Activated CD4-positive, alpha-beta memory T cell treated with anti-CD3 and anti-CD28 coated beads for 36 hours (primary cell): ENCODE measurements at regions of chr2 and their contacts with region 1.

Region 1: DNA sequence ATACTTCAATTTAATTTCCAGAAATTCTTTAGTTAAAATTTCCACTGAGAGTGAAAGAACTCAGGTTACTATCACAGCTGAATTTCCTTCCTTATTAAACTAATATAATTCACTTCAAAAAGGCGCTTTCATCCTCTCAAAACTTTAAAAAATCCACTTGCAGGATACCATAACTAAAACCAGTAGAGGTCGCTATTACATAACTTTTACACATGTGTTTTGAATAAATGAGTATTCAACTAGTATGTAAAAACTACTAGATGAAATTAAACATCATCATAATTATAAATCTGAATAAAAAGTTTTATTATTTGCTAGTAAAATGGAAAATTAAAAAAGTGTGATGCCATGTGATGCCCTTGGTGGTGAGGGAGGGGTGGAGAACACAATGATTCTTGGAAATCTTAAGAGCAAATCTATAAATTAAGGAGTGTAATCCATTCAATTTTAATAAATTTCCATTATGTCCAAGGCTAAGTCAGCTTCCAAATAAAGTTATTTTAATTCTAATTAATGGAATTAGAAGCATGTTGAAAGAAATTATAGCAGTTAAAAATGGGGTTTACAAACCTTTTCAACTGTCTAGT is 61.4 kb downstream of the SOS1 start:
- DNase-seq: no peak
- H3K4me3 Mint-ChIP-seq: no peak overlapping the region
- H3K27ac Mint-ChIP-seq: no peak overlapping the region
- H3K4me1 Mint-ChIP-seq: no peaks in the 10 kb centered on the region
- H3K27me3 Mint-ChIP-seq: no peaks in the 10 kb centered on the region

Region 2: GRCh38 chr2:39227628-39228412 is 168.4 kb after region 1 on chr2:
- CTCF ChIA-PET with region 1: interaction called, 410 read pairs
- POLR2A ChIA-PET with region 1: no interaction called
- intact Hi-C with region 1: loop called (anchors 1 kb)
- DNase-seq: peak; percentile 87
- H3K4me3 Mint-ChIP-seq: peak overlapping the region; percentile 56
- H3K27ac Mint-ChIP-seq: peak overlapping the region; percentile 59
- H3K4me1 Mint-ChIP-seq: peaks cover 36% of the 10 kb centered on the region
- H3K27me3 Mint-ChIP-seq: no peaks in the 10 kb centered on the region

Region 3: GRCh38 chr2:40230707-40231432 is 1171.4 kb after region 1 on chr2:
- CTCF ChIA-PET with region 1: no interaction called
- POLR2A ChIA-PET with region 1: no interaction called
- intact Hi-C with region 1: no loop called
- DNase-seq: no peak
- H3K4me3 Mint-ChIP-seq: no peak overlapping the region
- H3K27ac Mint-ChIP-seq: no peak overlapping the region
- H3K4me1 Mint-ChIP-seq: no peaks in the 10 kb centered on the region
- H3K27me3 Mint-ChIP-seq: no peaks in the 10 kb centered on the region